ENCODE measurements at regions of chr3 and their contacts with region 1.

Region 1: GRCh38 chr3:189458532-189458931 is 172.7 kb upstream of the TP63 start:
- DNase-seq: no peak
- ATAC-seq: no peak
- H3K4me3 ChIP-seq: no peak overlapping the region
- H3K4me3 Mint-ChIP-seq: no peak overlapping the region
- H3K27ac ChIP-seq: no peak overlapping the region
- H3K27ac Mint-ChIP-seq: no peak overlapping the region
- H3K4me1 ChIP-seq: no peaks in the 10 kb centered on the region
- H3K4me1 Mint-ChIP-seq: no peaks in the 10 kb centered on the region
- H3K27me3 ChIP-seq: no peaks in the 10 kb centered on the region
- H3K27me3 Mint-ChIP-seq: no peaks in the 10 kb centered on the region
- CTCF ChIP-seq: no peak

Region 2: DNA sequence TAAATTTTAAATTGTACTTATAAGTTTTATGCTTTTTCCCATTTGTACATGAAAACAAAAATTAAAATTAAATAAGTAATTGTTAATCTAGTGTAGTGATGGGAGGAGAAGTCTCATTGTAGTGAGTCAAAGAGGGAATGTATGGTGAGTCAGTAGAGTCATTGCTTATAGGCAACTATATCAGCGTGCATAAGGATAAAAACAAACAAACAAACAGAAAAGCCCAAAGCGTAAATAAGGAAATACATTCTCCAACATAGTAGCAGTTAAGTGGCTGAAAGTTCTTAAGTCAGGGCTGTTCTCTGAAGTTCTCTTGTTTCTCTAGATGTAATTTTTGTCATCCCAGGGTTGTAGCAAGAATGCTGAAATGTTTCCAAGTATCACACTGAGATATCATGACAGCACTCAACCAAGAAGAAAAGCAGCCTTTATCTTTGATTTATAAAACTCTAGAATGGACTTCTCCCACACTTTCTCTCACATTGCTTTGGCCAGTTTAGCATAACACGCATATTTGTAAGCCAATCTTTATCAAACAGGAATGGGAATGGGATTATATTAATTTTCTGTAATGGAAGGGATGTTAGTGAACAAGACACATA is 11.5 kb before region 1 on chr3:
- CTCF ChIA-PET with region 1: no interaction called
- POLR2A ChIA-PET with region 1: interaction called, 3 read pairs
- intact Hi-C with region 1: loop called in 1 of 2 experiments (anchors 1 kb)
- DNase-seq: no peak
- ATAC-seq: no peak
- H3K4me3 ChIP-seq: no peak overlapping the region
- H3K4me3 Mint-ChIP-seq: no peak overlapping the region
- H3K27ac ChIP-seq: no peak overlapping the region
- H3K27ac Mint-ChIP-seq: no peak overlapping the region
- H3K4me1 ChIP-seq: no peaks in the 10 kb centered on the region
- H3K4me1 Mint-ChIP-seq: no peaks in the 10 kb centered on the region
- H3K27me3 ChIP-seq: no peaks in the 10 kb centered on the region
- H3K27me3 Mint-ChIP-seq: no peaks in the 10 kb centered on the region
- CTCF ChIP-seq: no peak

Region 3: DNA sequence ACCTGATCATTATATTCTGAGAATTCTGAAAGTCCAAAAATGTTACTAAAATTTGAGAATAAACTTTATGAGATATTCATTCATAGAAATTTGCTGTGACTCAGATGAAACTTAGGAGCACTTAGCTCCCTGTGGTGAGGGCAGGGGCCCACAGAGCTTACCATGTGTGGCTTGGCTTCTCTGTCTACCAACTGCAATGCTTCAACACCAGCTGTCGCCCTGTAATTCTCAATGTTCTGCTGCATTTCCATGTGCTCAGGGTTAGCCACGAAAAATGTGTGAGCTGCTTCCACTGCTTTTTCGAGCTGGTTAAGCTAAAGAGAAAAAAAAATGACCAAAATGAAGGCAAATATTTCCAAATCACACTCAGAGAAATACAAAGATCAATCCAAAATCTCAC is 536.6 kb after region 1 on chr3:
- CTCF ChIA-PET with region 1: no interaction called
- POLR2A ChIA-PET with region 1: no interaction called
- intact Hi-C with region 1: no loop called
- DNase-seq: no peak
- ATAC-seq: no peak
- H3K4me3 ChIP-seq: no peak overlapping the region
- H3K4me3 Mint-ChIP-seq: no peak overlapping the region
- H3K27ac ChIP-seq: no peak overlapping the region
- H3K27ac Mint-ChIP-seq: no peak overlapping the region
- H3K4me1 ChIP-seq: no peaks in the 10 kb centered on the region
- H3K4me1 Mint-ChIP-seq: no peaks in the 10 kb centered on the region
- H3K27me3 ChIP-seq: peaks cover 0 to 5% of the 10 kb centered on the region in 2 experiments
- H3K27me3 Mint-ChIP-seq: peaks cover 37% of the 10 kb centered on the region
- CTCF ChIP-seq: no peak